Activated T-helper 1 cell treated with anti-CD3 and anti-CD28 coated beads, Interleukin-12 subunit alpha, Interleukin-12 subunit beta, Interleukin-2, Interleukin-4 antibody, amounts not matched to agents 30 ng/mL and 10 ng/mL and 1 ng/mL, durations not matched to agents 14 hours and 24 hours and 36 hours (primary cell): ENCODE measurements at regions of chr4 and their contacts with region 1.

Region 1: GRCh38 chr4:38179690-38180377 is 219.6 kb downstream of the PTTG2 start:
- DNase-seq: peak; percentile 59
- H3K4me3 Mint-ChIP-seq: no peak overlapping the region
- H3K27ac Mint-ChIP-seq: no peak overlapping the region
- H3K4me1 Mint-ChIP-seq: peaks cover 54% of the 10 kb centered on the region
- H3K27me3 Mint-ChIP-seq: peaks cover 11% of the 10 kb centered on the region

Region 2: DNA sequence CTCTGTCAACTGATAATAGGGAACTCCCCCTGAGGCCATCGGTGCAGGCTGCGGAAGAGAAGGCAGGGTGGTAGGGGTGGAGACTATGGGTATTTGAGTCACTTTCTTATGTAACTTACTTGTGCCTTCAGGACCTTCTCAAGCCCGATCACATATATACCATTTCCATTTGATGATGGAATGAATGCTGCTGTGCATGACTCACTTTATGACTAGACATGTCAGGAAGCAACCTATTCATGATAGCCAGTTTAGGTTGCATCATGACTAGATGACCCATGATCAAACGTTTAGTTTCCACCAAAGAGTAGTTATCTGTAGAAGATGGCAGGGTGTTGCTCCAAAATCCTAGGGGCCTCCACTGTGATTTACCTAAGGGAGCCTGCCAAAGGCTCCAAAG is 1463.0 kb before region 1 on chr4:
- intact Hi-C with region 1: no loop called
- DNase-seq: no peak
- H3K4me3 Mint-ChIP-seq: no peak overlapping the region
- H3K27ac Mint-ChIP-seq: no peak overlapping the region
- H3K4me1 Mint-ChIP-seq: no peaks in the 10 kb centered on the region
- H3K27me3 Mint-ChIP-seq: no peaks in the 10 kb centered on the region

Region 3: GRCh38 chr4:37279894-37280592 is 899.8 kb before region 1 on chr4:
- intact Hi-C with region 1: no loop called
- DNase-seq: no peak
- H3K4me3 Mint-ChIP-seq: no peak overlapping the region
- H3K27ac Mint-ChIP-seq: no peak overlapping the region
- H3K4me1 Mint-ChIP-seq: no peaks in the 10 kb centered on the region
- H3K27me3 Mint-ChIP-seq: no peaks in the 10 kb centered on the region

Region 4: GRCh38 chr4:38062088-38062893 is 117.5 kb before region 1 on chr4:
- intact Hi-C with region 1: loop called (anchors 1 kb)
- DNase-seq: peak; percentile 42
- H3K4me3 Mint-ChIP-seq: peak overlapping the region; percentile 83
- H3K27ac Mint-ChIP-seq: peak overlapping the region; percentile 69
- H3K4me1 Mint-ChIP-seq: peaks cover 16% of the 10 kb centered on the region
- H3K27me3 Mint-ChIP-seq: no peaks in the 10 kb centered on the region

Region 5: DNA sequence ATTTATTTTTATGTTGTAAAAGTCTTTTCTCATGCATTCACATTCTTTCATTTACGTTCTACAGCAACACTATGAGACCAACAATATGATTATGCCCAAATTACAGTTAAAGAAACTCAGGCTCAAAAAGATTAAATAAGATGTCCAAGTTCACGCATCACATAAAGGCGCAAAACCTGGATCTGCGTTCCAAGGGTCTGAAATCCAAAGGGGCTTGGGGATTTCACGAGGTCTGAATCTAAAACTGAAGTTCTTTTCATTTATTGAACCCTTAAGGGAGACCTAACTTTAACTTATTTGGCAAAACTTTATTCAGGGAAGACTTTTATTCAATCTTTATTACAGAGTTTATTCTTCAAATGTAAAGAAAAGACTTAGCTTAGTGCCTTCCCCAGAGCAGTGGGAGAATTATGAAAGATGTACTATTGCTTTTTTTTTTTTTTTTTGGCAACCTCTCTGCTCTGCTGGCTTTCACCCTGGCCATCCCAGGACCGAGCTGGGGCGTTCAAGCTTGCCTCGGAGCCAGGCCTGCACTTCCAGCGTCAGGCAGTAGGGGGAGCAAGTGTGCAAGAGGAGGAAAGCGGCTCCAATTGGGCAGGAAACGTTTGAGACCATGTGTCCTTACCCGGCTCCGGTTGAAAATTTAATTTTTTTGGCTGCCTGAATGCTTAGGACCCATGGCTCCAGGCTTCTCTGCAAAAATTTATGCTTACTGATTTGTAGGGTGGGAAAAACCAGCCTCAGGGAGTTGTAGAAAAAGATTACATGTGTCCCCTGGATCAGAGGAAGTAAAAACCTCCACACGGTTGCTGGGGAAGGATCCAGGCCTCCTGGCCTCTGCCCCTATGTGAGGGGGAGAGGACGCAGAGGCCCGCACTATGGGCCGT is 139.9 kb after region 1 on chr4:
- intact Hi-C with region 1: loop called (anchors 1 kb)
- DNase-seq: peak; percentile 83
- H3K4me3 Mint-ChIP-seq: peak overlapping the region; percentile 48
- H3K27ac Mint-ChIP-seq: peak overlapping the region; percentile 79
- H3K4me1 Mint-ChIP-seq: peaks cover 55% of the 10 kb centered on the region
- H3K27me3 Mint-ChIP-seq: peaks cover 5% of the 10 kb centered on the region

Region 6: GRCh38 chr4:38675146-38676121 is 495.6 kb after region 1 on chr4:
- intact Hi-C with region 1: loop called (anchors 1 kb)
- DNase-seq: peak; percentile 69
- H3K4me3 Mint-ChIP-seq: no peak overlapping the region
- H3K27ac Mint-ChIP-seq: no peak overlapping the region
- H3K4me1 Mint-ChIP-seq: peaks cover 66% of the 10 kb centered on the region
- H3K27me3 Mint-ChIP-seq: no peaks in the 10 kb centered on the region

Region 7: DNA sequence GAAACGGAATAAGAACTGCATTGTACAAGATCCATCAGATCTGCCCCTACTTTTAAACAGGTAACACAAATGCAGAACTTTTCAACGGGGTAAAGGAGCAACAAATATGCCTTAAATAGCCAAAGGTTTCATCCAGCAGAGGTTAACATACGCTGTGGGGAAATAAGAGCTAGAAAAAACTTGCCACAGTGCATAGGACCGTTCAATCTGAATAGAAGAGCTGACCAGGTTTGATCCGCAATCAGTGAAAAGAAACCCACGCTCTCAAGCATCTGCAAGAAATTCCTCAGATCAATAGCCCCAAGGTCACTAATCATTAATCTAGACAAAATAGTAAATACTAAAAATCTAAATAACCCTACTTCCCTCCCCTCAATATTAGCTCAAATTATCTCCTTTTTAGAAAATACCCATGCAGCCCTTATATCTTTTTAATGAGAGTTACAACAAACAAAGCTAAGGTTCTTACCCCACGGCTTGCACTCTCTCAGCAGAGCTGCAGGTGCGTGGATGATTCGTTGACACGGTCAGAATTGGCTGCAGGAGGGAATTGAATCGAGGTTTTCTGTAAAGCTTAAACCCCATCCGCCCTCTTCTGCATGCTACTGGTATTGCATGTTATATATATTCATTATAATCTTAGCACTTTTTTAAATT is 602.7 kb after region 1 on chr4 and contains the start of gene TLR10:
- intact Hi-C with region 1: loop called (anchors 1 kb)
- DNase-seq: no peak
- H3K4me3 Mint-ChIP-seq: no peak within 1 kb of the TSS
- H3K27ac Mint-ChIP-seq: no peak within 1 kb of the TSS
- H3K4me1 Mint-ChIP-seq: peaks cover 11% of the 10 kb centered on the region
- H3K27me3 Mint-ChIP-seq: peaks cover 1% of the 10 kb centered on the region
- total RNA-seq, gene TLR10: not detected in 2 replicates